PC-9 (cell line): ENCODE measurements at regions of chr4 and their contacts with region 1.

Region 1: GRCh38 chr4:86831262-86832130 is 17.7 kb downstream of the SLC10A6 start:
- DNase-seq: peak; percentile 69 to 96
- H3K4me3 ChIP-seq: peak overlapping the region; percentile 14; the same call in 1 of the 2 replicates
- H3K27ac ChIP-seq: peak overlapping the region; percentile 90
- H3K4me1 ChIP-seq: peaks cover 35% of the 10 kb centered on the region
- H3K27me3 ChIP-seq: no peaks in the 10 kb centered on the region
- CTCF ChIP-seq: no peak

Region 2: DNA sequence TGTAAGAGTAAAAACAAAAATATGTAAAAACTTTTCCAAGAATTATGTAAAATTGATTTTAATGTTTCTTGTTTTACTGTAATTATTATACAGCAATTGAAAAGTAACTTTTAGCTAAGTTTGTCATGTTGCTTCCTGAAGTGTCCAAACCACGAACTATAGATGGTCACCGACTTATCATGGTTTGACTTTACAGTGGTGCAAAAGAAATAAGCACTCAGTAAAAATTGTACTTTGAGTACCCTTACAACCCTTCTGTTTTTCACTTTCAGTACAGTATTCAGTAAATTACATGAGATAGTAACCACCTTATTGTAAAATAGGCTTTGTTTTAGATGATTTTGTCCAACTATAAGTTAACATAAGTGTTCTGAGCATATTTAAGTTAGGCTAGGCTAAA is 76.1 kb before region 1 on chr4:
- CTCF ChIA-PET with region 1: no interaction called
- POLR2A ChIA-PET with region 1: no interaction called
- intact Hi-C with region 1: no loop called
- DNase-seq: no peak
- H3K4me3 ChIP-seq: no peak overlapping the region
- H3K27ac ChIP-seq: no peak overlapping the region
- H3K4me1 ChIP-seq: no peaks in the 10 kb centered on the region
- H3K27me3 ChIP-seq: no peaks in the 10 kb centered on the region
- CTCF ChIP-seq: no peak

Region 3: GRCh38 chr4:86855573-86855992 is 24.1 kb after region 1 on chr4:
- CTCF ChIA-PET with region 1: interaction called, 10 read pairs
- POLR2A ChIA-PET with region 1: no interaction called
- intact Hi-C with region 1: no loop called
- DNase-seq: peak; percentile 24 to 78
- H3K4me3 ChIP-seq: peak overlapping the region; percentile 13; the same call in 1 of the 2 replicates
- H3K27ac ChIP-seq: peak overlapping the region; percentile 51
- H3K4me1 ChIP-seq: peaks cover 30% of the 10 kb centered on the region
- H3K27me3 ChIP-seq: no peaks in the 10 kb centered on the region
- CTCF ChIP-seq: no peak; the same call in 1 of the 2 replicates